ENCODE measurements at regions of chr1 and their contacts with region 1.

Region 1: DNA sequence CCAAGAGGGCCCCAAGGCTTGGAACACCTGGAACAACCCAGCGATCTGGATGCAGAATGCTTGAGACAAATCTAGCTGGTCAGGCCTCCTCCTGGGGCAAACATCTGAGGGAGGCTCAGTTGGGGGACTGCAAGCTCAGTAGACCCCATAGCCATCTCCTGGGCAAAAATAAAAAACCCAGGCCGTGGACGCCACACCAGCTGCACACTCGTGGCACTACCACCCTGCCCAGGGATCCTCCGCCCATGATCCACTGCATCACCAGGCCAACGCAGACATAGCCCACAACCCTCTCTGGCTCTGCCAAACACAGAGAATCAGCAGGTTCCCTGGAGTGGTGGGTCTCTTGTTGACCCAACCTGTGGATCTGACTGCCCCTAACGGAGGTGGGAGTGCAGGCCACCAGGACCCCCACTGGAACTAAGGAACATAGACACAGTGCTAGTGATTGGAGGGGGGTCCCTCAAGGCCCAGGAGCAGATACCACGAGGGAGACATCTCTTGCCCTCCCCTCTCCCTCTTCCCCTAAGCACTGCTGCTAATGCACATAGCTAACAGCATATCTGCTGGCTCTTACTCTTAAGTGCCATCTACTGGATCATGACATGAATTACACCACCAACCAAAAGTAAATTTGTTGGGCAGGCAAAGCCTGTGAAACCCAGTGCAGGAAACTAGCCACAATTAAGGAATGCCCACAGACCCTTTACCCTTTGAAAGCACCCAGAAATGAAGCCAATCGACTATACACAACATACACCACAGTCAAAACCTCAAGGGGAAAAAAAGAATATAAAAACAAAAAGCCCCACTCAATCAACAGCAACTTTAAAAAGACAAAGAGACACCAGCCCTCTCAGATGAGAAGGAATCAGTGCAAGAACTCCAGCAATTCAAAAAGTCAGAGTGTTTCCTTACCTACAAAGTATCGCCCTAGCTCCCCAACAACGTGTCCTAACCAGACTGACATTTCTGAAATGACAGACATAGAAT is 147.3 kb downstream of the CHD1L start:
- DNase-seq: no peak
- ATAC-seq: peak in 5 of 8 donors; percentile 17 to 56 (median 34)
- H3K4me3 ChIP-seq: no peak overlapping the region
- H3K27ac ChIP-seq: no peak overlapping the region
- H3K4me1 ChIP-seq: no peaks in the 10 kb centered on the region
- H3K27me3 ChIP-seq: peaks cover 0 to 4% (median 0%) of the 10 kb centered on the region in 7 donors
- CTCF ChIP-seq: peak; percentile 22 to 71 (median 60)

Region 2: DNA sequence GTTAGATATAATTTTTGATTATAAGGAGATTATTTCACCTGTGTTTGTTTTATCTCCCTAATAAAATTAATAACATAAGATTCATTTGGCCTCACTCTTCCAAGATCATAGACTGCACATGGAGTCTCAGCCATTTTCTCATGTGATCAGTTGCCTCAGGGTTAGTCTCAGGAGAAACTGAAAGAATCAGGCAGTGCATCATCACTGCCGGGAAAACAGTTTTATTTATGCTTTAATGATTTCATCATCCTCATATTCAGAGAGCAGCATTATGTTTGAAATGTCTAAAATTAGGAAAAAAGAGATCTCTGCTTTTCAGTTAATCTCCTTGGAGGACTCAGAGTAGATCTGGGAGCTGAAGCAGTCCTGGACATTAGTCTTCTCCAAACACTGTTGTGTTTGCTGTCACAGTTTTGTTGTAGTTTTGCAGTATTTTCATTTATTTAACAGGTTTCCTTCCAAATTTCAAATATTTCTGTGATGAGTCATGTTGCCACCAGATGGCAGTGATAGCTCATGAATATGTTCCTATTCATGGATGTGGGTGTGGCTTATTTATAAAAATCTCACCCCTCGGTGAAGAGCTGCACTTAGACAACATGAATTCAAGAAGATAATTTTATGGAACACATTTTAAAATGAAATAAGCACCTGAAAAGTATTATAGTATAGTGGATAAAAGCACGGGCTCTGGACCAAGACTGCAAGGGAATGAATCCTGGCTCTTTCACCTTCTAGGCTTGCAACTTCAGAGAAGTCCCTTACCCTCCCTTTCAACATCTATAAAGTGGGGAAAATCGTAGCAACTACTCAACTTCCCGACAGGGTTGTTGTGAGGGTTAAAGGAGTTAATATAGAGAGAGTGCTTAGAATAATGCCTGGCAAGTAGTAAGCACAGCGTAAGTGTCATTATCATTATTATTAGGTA is 116.2 kb before region 1 on chr1:
- intact Hi-C with region 1: loop called in 8 of 10 experiments (anchors 2 to 10 kb)
- DNase-seq: peak in 1 of 2 donors; percentile 40
- ATAC-seq: peak in 7 of 8 donors; percentile 38 to 82 (median 70)
- H3K4me3 ChIP-seq: no peak overlapping the region
- H3K27ac ChIP-seq: peak overlapping the region in 4 of 10 donors; percentile 18 to 66 (median 40)
- H3K4me1 ChIP-seq: peaks cover 0 to 18% (median 5%) of the 10 kb centered on the region in 9 donors
- H3K27me3 ChIP-seq: no peaks in the 10 kb centered on the region
- CTCF ChIP-seq: peak; percentile 14 to 73 (median 63)

Measured in heart right ventricle (tissue), 16 donors.